H1 (cell line): ENCODE measurements at regions of chr10 and their contacts with region 1.

Region 1: DNA sequence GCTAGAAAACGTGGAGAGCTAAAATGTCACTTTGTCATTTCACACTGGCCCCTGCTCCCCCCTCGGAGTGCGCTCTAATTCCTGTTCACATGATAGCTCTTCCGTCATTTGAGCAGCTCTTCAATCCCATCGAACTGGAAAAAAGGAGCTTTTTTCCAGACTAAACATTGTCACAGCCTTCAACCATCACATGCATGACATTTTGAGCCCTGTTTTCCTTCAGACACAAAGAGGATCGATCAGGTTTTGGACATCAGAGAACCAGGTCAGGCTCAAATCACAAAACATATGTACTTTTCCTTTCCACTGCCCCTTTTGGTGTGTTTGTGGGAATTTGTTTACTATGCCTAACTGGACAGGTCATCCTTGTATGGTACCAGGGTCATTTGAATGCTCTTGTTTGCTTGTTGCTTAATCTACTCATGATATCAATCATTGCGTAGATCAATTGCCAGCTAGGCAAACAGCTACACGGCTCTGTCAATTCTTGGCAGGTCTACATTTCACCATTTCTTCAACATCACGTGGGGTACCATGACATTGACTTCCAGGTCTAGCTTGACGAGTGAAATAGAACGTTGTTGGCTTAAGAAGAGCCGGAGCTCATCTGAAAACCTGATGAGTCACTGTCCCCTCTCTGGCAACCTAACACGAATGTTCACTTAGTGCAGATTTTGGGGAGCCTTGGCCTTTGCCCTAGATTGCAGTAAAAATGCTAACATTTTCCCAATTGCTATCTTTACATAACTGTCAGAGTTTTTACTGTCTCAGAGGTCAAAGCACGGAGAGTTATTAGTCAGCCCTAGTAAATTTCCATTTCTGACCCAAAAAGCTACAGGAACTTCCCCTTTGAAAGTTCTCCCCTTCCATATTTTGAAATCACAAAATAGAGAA is 87.3 kb downstream of the LYZL2 start:
- DNase-seq: no peak
- H3K4me3 ChIP-seq: no peak overlapping the region
- H3K27ac ChIP-seq: no peak overlapping the region
- H3K4me1 ChIP-seq: peaks cover 0 to 8% (median 3%) of the 10 kb centered on the region in 4 experiments; a peak in 3 of 7 replicates
- H3K27me3 ChIP-seq: no peaks in the 10 kb centered on the region
- CTCF ChIP-seq: no peak
- EP300 ChIP-seq: no peak
- POLR2A ChIP-seq: no peak
- RAD21 ChIP-seq: no peak

Region 2: GRCh38 chr10:30553625-30554439 is 11.6 kb after region 1 on chr10:
- CTCF ChIA-PET with region 1: interaction called, 6 read pairs
- POLR2A ChIA-PET with region 1: interaction called, 16 read pairs
- DNase-seq: peak in 1 of 2 experiments; percentile 55
- H3K4me3 ChIP-seq: peak overlapping the region in 2 of 4 experiments; percentile 1 to 46; a peak in 4 of 8 replicates
- H3K27ac ChIP-seq: peak overlapping the region; percentile 89
- H3K4me1 ChIP-seq: peaks cover 0 to 15% (median 5%) of the 10 kb centered on the region in 4 experiments; a peak in 6 of 7 replicates
- H3K27me3 ChIP-seq: no peaks in the 10 kb centered on the region
- CTCF ChIP-seq: no peak
- EP300 ChIP-seq: no peak; a peak in 1 of 3 replicates
- POLR2A ChIP-seq: peak in 1 of 2 experiments; percentile 70; a peak in 2 of 3 replicates
- RAD21 ChIP-seq: no peak